ENCODE measurements at regions of chr10 and their contacts with region 1.

Region 1: GRCh38 chr10:120336911-120337540 is 120.0 kb upstream of the PLPP4 start:
- DNase-seq: peak; percentile 75
- ATAC-seq: no peak
- H3K4me3 Mint-ChIP-seq: no peak overlapping the region
- H3K27ac Mint-ChIP-seq: no peak overlapping the region
- H3K4me1 Mint-ChIP-seq: no peaks in the 10 kb centered on the region
- H3K27me3 Mint-ChIP-seq: peaks cover 11% of the 10 kb centered on the region

Region 2: DNA sequence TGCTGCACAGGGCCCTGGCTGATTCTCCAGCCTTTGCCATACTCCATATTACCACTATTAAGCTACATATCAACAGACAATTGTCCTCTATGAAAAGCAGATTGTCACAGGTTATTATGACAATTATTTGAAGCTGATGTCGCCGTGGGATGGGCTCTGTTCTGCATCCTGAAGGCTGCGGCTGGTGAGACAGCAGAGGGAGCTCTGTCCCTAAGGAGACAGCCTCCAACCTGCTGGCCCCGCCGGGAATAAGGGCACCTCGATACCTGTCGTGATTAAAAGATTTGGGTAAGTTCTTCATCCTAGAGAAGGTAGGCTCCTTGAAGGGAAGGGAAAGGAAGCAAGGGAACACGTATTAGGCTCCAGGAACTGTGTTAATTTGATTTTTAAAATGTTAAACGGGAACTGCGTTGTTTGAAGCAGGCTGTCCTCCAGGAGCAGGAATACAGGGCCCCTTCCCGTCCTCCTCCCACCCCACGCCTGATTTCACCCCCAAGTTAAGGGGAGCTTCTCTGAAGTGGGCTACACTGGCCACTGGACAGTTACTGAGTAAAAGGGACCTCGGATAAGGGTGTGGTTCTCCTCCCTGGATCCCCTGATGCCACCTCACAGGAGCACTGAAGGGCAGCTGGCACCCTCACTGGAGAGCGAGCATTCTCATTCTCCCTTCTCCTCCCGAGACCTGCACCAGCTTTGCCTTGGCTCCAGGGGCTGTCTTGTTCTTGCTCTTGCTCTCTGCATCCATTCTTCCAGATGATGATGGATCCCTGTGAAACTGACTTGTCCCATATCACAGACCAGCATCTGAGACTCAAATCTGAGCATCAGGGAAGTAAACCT is 728.5 kb before region 1 on chr10:
- CTCF ChIA-PET with region 1: no interaction called
- POLR2A ChIA-PET with region 1: no interaction called
- intact Hi-C with region 1: loop called in 1 of 2 experiments (anchors 5 kb)
- DNase-seq: peak; percentile 59
- ATAC-seq: peak; percentile 69
- H3K4me3 Mint-ChIP-seq: no peak overlapping the region
- H3K27ac Mint-ChIP-seq: no peak overlapping the region
- H3K4me1 Mint-ChIP-seq: peaks cover 8% of the 10 kb centered on the region
- H3K27me3 Mint-ChIP-seq: no peaks in the 10 kb centered on the region

Region 3: DNA sequence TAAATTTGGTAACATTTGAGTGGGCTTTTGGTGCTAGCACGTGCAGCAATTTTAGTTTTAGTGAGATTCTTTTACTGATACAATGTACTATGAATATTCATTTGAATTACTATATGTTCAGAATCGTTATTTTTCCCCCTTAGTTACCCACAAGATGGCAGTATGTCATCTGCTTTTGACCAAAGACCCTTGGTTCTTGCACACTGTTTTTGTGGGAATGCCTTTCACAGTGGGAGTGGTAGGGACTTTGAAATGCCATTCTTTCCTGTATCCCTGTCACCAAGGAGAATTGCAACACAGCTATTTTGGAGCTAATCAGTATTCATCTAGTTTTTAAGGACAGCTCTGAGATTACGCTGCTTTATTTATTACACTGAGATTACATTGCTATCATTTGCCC is 403.8 kb before region 1 on chr10:
- CTCF ChIA-PET with region 1: interaction called, 3 read pairs
- POLR2A ChIA-PET with region 1: no interaction called
- intact Hi-C with region 1: loop called in 1 of 2 experiments (anchors 2 kb)
- DNase-seq: no peak
- ATAC-seq: no peak
- H3K4me3 Mint-ChIP-seq: no peak overlapping the region
- H3K27ac Mint-ChIP-seq: no peak overlapping the region
- H3K4me1 Mint-ChIP-seq: peaks cover 13% of the 10 kb centered on the region
- H3K27me3 Mint-ChIP-seq: no peaks in the 10 kb centered on the region

Region 4: GRCh38 chr10:120221873-120222485 is 115.0 kb before region 1 on chr10:
- CTCF ChIA-PET with region 1: interaction called, 13 read pairs
- POLR2A ChIA-PET with region 1: no interaction called
- intact Hi-C with region 1: loop called (anchors 1 to 2 kb)
- DNase-seq: peak; percentile 31
- ATAC-seq: no peak
- H3K4me3 Mint-ChIP-seq: no peak overlapping the region
- H3K27ac Mint-ChIP-seq: no peak overlapping the region
- H3K4me1 Mint-ChIP-seq: no peaks in the 10 kb centered on the region
- H3K27me3 Mint-ChIP-seq: peaks cover 5% of the 10 kb centered on the region

Measured in activated CD4-positive, alpha-beta T cell treated with anti-CD3 and anti-CD28 coated beads for 36 hours (primary cell).